ENCODE measurements at regions of chr16 and their contacts with region 1.

Region 1: GRCh38 chr16:19167710-19168370 is at the start of gene SYT17:
- DNase-seq: peak; percentile 60
- ATAC-seq: peak; percentile 92
- H3K4me3 ChIP-seq: peak within 1 kb of the TSS; percentile 69 to 78
- H3K27ac ChIP-seq: peak within 1 kb of the TSS; percentile 72
- H3K4me1 ChIP-seq: peaks cover 4 to 36% of the 10 kb centered on the region in 2 experiments; a peak in 3 of 4 replicates
- H3K27me3 ChIP-seq: no peaks in the 10 kb centered on the region
- CTCF ChIP-seq: peak; percentile 68 to 95 (median 69)
- POLR2A ChIP-seq: no peak
- RAD21 ChIP-seq: peak; percentile 81
- total RNA-seq, gene SYT17: 10.3 TPM

Region 2: GRCh38 chr16:19127674-19128131 is 40.1 kb before region 1 on chr16:
- CTCF ChIA-PET with region 1: no interaction called
- POLR2A ChIA-PET with region 1: no interaction called
- RAD21 ChIA-PET with region 1: no interaction called
- intact Hi-C with region 1: no loop called
- DNase-seq: no peak
- ATAC-seq: no peak
- H3K4me3 ChIP-seq: no peak overlapping the region
- H3K27ac ChIP-seq: no peak overlapping the region
- H3K4me1 ChIP-seq: peaks cover 31 to 38% of the 10 kb centered on the region in 2 experiments
- H3K27me3 ChIP-seq: no peaks in the 10 kb centered on the region
- CTCF ChIP-seq: no peak
- POLR2A ChIP-seq: no peak
- RAD21 ChIP-seq: no peak

Region 3: DNA sequence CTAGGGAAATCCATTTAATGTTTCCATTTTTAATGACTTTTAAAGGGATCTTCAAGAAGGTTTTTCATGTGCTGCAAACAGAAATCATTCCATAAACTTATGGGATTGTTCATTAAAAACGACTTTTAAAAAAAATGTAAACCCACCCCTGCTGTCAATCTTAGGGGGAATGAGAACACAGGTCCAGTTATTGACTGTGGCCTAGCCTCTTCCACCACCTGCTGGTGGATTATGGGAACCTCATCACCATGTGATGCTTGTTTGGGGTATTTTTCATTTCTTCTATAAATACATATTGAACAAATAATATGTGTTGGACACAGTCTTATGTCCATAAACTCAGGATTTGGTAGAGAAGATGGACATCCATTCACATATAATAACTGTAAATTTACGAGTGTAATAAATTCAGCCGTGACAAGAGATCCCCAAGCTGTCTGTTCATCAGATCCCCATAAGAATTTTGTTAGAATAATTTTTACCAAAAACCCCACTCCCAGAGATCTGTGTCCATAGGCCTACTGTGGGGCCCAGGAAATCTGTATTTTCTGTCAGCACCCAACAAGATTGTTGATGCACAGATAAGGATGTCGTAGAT is 207.8 kb after region 1 on chr16:
- CTCF ChIA-PET with region 1: interaction called, 3 read pairs
- POLR2A ChIA-PET with region 1: no interaction called
- RAD21 ChIA-PET with region 1: no interaction called
- intact Hi-C with region 1: loop called (anchors 1 kb)
- DNase-seq: peak; percentile 60
- ATAC-seq: peak; percentile 89
- H3K4me3 ChIP-seq: no peak overlapping the region
- H3K27ac ChIP-seq: no peak overlapping the region
- H3K4me1 ChIP-seq: no peaks in the 10 kb centered on the region
- H3K27me3 ChIP-seq: no peaks in the 10 kb centered on the region
- CTCF ChIP-seq: peak; percentile 85 to 96 (median 90)
- POLR2A ChIP-seq: no peak
- RAD21 ChIP-seq: peak; percentile 99

Measured in HCT116 (cell line).